BJ (cell line): ENCODE measurements at regions of chr3 and their contacts with region 1.

Region 1: GRCh38 chr3:141686466-141687291 is 51.4 kb upstream of the RNF7 start:
- DNase-seq: no peak
- H3K4me3 ChIP-seq: peak overlapping the region; percentile 10
- H3K27me3 ChIP-seq: no peaks in the 10 kb centered on the region
- CTCF ChIP-seq: no peak

Region 2: GRCh38 chr3:141710573-141711251 is 24.0 kb after region 1 on chr3:
- CTCF ChIA-PET with region 1: no interaction called
- POLR2A ChIA-PET with region 1: interaction called, 15 read pairs
- DNase-seq: peak; percentile 62
- H3K4me3 ChIP-seq: no peak overlapping the region
- H3K27me3 ChIP-seq: no peaks in the 10 kb centered on the region
- CTCF ChIP-seq: no peak

Region 3: GRCh38 chr3:142211035-142211434 is 524.4 kb after region 1 on chr3:
- CTCF ChIA-PET with region 1: no interaction called
- POLR2A ChIA-PET with region 1: interaction called, 13 read pairs
- DNase-seq: no peak
- H3K4me3 ChIP-seq: no peak overlapping the region
- H3K27me3 ChIP-seq: no peaks in the 10 kb centered on the region
- CTCF ChIP-seq: peak; percentile 26